GM12878 (cell line): ENCODE measurements at regions of chr1 and their contacts with region 1.

Region 1: DNA sequence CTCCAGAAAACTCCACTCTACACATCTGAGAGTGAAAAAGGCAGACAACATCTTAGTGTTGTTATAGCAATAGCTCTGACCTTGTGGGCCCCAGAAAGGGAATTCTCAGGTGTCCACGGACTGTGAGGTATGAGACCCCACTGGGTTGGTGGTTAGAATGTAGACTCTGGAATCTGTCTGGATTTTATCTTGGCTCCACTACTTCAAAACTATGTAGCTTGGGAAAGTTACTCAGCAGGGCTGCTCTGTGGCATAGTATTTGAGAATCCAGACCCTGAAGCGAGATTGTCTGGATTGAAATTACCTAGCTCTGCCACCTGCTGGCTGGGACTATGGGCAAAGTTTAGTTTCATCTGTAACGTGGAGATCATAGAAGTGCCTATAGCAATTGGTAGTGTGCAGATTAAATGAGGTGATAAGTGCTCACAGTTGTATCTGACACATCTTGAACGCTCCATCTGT is 25.8 kb downstream of the PRDM2 start:
- DNase-seq: no peak
- ATAC-seq: peak; percentile 62
- H3K4me3 ChIP-seq: no peak overlapping the region
- H3K27ac ChIP-seq: peak overlapping the region; percentile 27
- H3K4me1 ChIP-seq: peaks cover 42% of the 10 kb centered on the region
- H3K27me3 ChIP-seq: no peaks in the 10 kb centered on the region
- CTCF ChIP-seq: peak; percentile 57 to 69 (median 62); a peak in 5 of 6 replicates
- EP300 ChIP-seq: no peak
- POLR2A ChIP-seq: no peak
- RAD21 ChIP-seq: peak; percentile 77

Region 2: GRCh38 chr1:13667691-13668090 is 58.1 kb before region 1 on chr1:
- CTCF ChIA-PET with region 1: interaction called, 88 read pairs
- POLR2A ChIA-PET with region 1: interaction called, 8 read pairs
- RAD21 ChIA-PET with region 1: interaction called, 50 read pairs
- SMC1A ChIA-PET with region 1: interaction called, 121 read pairs
- in situ Hi-C with region 1: loop called (anchors 5 kb)
- intact Hi-C with region 1: loop called (anchors 1 kb)
- DNase-seq: peak; percentile 33
- ATAC-seq: peak; percentile 61
- H3K4me3 ChIP-seq: no peak overlapping the region
- H3K27ac ChIP-seq: peak overlapping the region; percentile 31
- H3K4me1 ChIP-seq: peaks cover 23% of the 10 kb centered on the region
- H3K27me3 ChIP-seq: no peaks in the 10 kb centered on the region
- CTCF ChIP-seq: no peak
- EP300 ChIP-seq: no peak
- POLR2A ChIP-seq: no peak
- RAD21 ChIP-seq: no peak

Region 3: DNA sequence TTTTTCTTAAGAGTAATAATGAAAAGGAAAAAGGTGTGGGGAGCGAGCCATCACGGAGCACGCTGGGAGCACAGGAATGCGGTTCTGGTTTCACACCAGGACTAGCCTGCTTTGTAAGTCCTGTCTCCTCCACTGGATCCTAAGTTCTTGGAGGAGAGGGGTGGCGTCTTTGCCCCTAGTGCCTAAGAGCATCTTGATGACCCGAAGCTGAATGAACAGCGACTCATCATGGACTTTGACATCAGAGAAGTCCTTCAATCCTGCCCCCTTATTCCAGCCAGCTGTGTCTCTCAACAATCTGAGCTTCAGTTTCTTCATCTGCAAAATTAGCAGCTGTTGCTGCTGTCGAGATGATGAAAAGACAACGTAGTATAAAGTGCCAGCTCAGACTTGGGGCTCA is 30.9 kb before region 1 on chr1:
- CTCF ChIA-PET with region 1: interaction called, 15 read pairs
- POLR2A ChIA-PET with region 1: no interaction called
- RAD21 ChIA-PET with region 1: interaction called, 7 read pairs
- SMC1A ChIA-PET with region 1: interaction called, 14 read pairs
- in situ Hi-C with region 1: no loop called
- intact Hi-C with region 1: no loop called
- DNase-seq: no peak
- ATAC-seq: no peak
- H3K4me3 ChIP-seq: no peak overlapping the region
- H3K27ac ChIP-seq: no peak overlapping the region
- H3K4me1 ChIP-seq: peaks cover 6% of the 10 kb centered on the region
- H3K27me3 ChIP-seq: no peaks in the 10 kb centered on the region
- CTCF ChIP-seq: no peak
- EP300 ChIP-seq: no peak
- POLR2A ChIP-seq: no peak
- RAD21 ChIP-seq: no peak

Region 4: GRCh38 chr1:13707164-13707563 is 18.6 kb before region 1 on chr1:
- CTCF ChIA-PET with region 1: interaction called, 212 read pairs
- POLR2A ChIA-PET with region 1: interaction called, 60 read pairs
- RAD21 ChIA-PET with region 1: interaction called, 367 read pairs
- SMC1A ChIA-PET with region 1: interaction called, 425 read pairs
- in situ Hi-C with region 1: no loop called
- intact Hi-C with region 1: no loop called
- DNase-seq: no peak
- ATAC-seq: no peak
- H3K4me3 ChIP-seq: no peak overlapping the region
- H3K27ac ChIP-seq: no peak overlapping the region
- H3K4me1 ChIP-seq: peaks cover 16% of the 10 kb centered on the region
- H3K27me3 ChIP-seq: no peaks in the 10 kb centered on the region
- CTCF ChIP-seq: no peak
- EP300 ChIP-seq: no peak
- POLR2A ChIP-seq: no peak
- RAD21 ChIP-seq: no peak

Region 5: GRCh38 chr1:13748610-13749505 is 23.1 kb after region 1 on chr1:
- CTCF ChIA-PET with region 1: interaction called, 36 read pairs
- POLR2A ChIA-PET with region 1: interaction called, 6 read pairs
- RAD21 ChIA-PET with region 1: interaction called, 28 read pairs
- SMC1A ChIA-PET with region 1: interaction called, 18 read pairs
- in situ Hi-C with region 1: no loop called
- intact Hi-C with region 1: loop called (anchors 2 kb)
- DNase-seq: peak; percentile 61
- ATAC-seq: peak; percentile 87
- H3K4me3 ChIP-seq: peak overlapping the region; percentile 60
- H3K27ac ChIP-seq: peak overlapping the region; percentile 72
- H3K4me1 ChIP-seq: peaks cover 13% of the 10 kb centered on the region
- H3K27me3 ChIP-seq: no peaks in the 10 kb centered on the region
- CTCF ChIP-seq: peak in 2 of 3 experiments; percentile 0 to 18; a peak in 1 of 6 replicates
- EP300 ChIP-seq: no peak
- POLR2A ChIP-seq: peak; percentile 90
- RAD21 ChIP-seq: no peak